ENCODE measurements at regions of chr6 and their contacts with region 1.

Region 1: DNA sequence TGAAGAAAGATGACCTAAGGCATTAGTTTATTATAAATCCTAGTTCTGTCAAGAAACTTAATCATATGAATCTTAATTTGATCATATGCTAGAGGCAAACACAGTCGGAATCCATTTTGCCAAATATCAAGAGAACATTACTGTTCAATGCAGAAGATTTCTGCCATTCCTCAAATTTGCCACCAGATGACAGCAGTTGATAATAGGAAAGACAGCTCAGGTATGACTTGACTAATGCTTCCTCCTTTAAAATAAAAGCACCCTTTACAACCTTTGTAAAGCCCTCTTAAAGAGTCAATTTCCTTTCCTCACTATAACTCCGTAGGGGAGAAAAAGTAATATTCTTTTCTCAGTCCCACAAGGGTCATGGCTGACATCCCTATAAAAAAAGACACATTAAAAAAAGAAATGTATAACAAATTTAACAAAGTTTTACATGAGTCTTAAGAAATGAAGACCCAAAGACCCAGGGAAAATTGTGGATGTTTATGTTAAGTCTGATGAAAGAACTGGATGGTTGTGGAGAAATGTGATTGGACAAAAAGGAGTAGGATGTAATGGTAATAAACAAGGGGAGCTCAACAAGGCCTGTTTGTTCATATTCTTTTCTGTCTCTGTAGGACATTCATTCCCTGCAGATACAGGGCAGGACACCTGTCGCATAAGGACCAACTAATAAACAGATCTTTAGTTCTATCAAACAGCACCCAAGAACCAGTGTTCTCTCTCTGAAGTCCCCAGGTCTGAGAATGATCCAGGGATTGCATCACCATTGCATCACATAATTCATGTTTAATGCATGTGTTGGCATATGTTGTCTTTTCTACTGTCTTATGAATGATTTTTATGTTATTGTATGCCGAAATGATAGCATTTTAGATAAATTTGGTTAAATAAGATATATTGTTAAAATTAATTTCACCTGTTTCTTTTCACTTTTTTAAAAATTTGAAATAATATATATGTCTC is 23.0 kb upstream of the IL17A start:
- H3K4me3 ChIP-seq: no peak overlapping the region
- H3K27ac ChIP-seq: no peak overlapping the region
- H3K4me1 ChIP-seq: peaks cover 9% of the 10 kb centered on the region; the same call in 1 of the 2 replicates
- CTCF ChIP-seq: peak; percentile 77

Region 2: DNA sequence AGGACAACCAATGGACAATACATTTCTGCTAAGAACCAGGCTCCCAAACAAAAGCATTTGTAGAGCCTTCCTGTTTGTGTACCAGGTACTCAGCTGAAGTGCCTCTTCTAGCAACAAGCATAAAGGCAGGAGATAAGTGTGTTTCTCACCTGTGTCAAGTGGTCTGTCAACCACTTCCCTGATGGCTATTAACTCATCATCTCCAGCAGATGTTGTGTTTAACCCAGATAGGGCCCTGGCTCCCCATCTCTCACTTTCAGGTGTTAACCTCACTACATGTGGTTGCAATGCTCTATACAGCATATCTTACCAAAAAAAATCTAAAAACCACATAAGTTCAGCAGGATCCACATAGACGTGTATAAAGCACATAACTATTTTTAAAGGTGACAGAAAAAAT is 13.3 kb after region 1 on chr6:
- CTCF ChIA-PET with region 1: interaction called, 39 read pairs
- POLR2A ChIA-PET with region 1: interaction called, 4 read pairs
- H3K4me3 ChIP-seq: no peak overlapping the region
- H3K27ac ChIP-seq: no peak overlapping the region
- H3K4me1 ChIP-seq: peaks cover 6% of the 10 kb centered on the region; the same call in 1 of the 2 replicates
- CTCF ChIP-seq: no peak

Region 3: GRCh38 chr6:52216932-52217575 is 53.8 kb after region 1 on chr6:
- CTCF ChIA-PET with region 1: no interaction called
- POLR2A ChIA-PET with region 1: no interaction called
- H3K4me3 ChIP-seq: no peak overlapping the region
- H3K27ac ChIP-seq: no peak overlapping the region
- H3K4me1 ChIP-seq: no peaks in the 10 kb centered on the region
- CTCF ChIP-seq: no peak

Region 4: DNA sequence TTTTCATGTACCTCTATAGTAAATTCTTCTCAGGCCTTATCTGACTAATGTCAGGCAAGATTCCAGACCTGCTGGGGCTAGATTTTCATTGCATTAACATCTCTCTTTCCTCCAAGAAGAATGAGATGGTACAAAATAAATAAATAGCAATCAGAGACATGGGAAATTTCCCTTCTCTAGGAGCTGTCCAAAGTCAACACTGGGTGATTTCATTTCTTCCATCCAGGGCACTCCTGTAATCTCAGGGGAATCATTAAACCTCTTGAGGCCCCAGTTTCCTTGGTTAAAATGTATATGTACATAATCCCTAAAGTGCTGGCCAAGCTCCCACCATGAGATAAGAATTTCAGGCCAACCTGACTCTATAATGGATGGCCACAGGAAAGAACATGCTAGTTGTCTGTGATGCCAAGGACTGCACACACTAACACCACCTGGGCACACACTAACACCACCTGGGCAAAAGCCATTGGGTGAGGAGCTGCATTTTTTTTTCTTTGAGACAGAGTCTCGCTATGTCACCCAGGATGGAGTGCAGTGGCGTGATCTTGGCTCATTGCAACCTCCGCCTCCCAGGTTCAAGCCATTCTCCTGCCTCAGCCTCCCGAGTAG is 80.2 kb after region 1 on chr6:
- CTCF ChIA-PET with region 1: interaction called, 21 read pairs
- POLR2A ChIA-PET with region 1: no interaction called
- H3K4me3 ChIP-seq: no peak overlapping the region
- H3K27ac ChIP-seq: peak overlapping the region; percentile 70
- H3K4me1 ChIP-seq: peaks cover 19% of the 10 kb centered on the region
- CTCF ChIP-seq: no peak

Region 5: DNA sequence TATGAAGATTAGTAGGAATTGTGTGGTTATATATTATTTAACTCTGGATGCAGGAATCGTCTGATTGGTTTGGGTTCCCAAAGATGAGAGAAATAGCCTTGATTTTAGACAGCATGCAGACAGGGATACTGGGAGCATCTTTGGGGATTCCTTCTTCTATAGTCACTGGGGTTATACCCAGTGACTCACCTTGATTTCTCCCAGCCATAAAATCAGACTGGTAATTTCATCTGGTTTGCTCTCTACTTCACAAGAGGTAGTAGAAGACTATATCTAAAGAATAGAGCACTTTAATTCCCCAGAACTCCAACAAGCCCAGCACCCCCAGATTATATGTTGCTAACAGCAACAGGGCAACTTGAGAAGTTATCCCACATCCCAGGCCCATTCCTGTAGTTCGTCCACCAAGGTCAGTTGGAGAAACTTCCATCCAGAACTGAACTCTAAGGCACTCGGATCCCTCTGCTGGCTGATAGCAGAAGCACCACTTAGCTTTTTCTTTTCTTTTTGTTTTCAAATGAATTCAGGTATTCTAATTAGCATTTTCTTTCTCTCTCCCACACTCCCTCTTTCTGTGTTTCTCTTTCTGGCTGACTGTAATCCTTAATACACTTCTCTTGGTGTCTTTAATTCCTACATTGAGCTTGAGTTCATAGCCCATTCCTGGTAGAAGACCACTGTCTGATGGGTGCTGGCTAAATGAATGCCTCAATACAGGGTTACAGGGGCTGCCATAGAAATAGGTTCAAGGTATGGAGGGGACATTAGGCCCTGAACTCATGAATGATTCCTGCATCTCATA is 236.5 kb after region 1 on chr6:
- CTCF ChIA-PET with region 1: interaction called, 12 read pairs
- POLR2A ChIA-PET with region 1: no interaction called
- H3K4me3 ChIP-seq: no peak overlapping the region
- H3K27ac ChIP-seq: no peak overlapping the region
- H3K4me1 ChIP-seq: no peaks in the 10 kb centered on the region
- CTCF ChIP-seq: peak; percentile 68